Endothelial cell of umbilical vein (primary cell): ENCODE measurements at regions of chr16 and their contacts with region 1.

Region 1: DNA sequence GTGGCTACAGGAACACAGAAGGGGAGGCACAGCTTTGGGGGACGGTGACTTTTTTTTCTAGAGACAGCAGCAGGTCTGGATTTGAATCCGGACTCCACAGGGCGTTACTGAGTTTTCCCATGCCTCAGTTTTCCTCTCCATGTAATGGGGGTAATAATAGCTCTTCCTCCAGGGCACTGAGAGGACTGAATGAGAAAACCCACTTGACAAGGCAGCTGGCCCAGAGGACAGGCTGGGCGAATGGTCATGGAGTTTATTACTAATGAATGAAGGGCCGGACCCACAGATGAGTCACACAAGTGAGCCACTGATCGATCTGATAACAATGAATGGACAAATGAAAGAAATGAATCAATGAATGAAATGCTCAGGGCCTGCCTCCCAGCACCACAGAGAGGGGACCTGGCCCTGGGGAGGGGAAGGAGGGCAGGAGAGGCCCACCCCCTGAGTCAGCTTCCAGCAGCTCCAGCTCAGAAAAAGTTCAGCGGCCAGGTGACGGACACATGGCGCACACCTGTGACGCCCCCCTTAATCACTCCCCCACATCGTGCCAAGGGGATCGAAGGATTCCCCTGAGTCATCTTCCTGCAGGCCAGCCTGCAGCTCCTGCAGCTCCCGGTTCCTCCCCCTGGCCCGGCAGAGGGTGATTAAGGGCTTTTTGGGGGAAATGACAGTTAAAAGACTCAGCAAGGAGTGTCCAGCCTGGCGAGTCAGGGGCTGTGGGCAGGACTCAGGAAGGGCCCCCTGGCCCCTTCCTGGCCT is 54.3 kb downstream of the SOCS1 start:
- DNase-seq: peak; percentile 87
- H3K4me3 ChIP-seq: no peak overlapping the region
- H3K27ac ChIP-seq: peak overlapping the region; percentile 79
- H3K4me1 ChIP-seq: peaks cover 19% of the 10 kb centered on the region
- H3K27me3 ChIP-seq: no peaks in the 10 kb centered on the region
- CTCF ChIP-seq: no peak
- POLR2A ChIP-seq: no peak

Region 2: DNA sequence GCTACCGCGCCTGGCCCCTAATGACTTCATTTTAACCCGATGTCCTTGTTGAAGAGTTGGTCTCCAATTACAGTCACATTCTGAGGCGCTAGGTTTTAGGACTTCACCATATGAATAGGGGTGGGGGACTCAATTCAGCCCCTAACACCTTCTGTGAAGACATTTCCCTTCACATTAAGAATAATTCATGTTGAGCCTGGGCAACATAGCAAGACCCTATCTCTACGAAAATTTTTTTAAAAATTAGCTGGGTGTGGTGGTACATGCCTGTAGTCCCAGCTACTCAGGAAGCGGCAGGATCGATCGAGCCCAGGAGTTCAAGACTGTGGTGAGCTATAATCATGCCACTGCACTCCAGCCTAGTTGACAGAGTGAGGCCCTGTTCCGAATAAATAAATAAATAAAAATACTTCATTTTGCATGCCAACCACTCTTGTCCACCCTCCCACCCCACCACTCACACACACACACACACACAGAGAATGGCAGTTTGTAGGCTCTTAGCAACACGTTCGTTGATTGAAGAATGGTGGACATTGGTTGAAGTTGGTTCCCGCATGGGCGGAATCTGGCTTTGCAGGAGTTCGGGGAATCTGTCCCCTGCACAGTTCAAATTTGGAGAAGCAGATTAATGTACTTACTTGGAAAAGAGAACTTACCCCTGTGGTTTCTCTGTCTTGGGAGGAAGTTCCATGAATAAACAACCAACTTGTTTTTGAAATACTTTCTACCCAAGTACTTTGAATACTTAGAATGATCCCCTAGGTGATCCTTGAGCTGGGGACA is 355.3 kb before region 1 on chr16:
- CTCF ChIA-PET with region 1: no interaction called
- POLR2A ChIA-PET with region 1: no interaction called
- dilution Hi-C with region 1: no loop called
- intact Hi-C with region 1: no loop called
- DNase-seq: no peak
- H3K4me3 ChIP-seq: no peak overlapping the region
- H3K27ac ChIP-seq: no peak overlapping the region
- H3K4me1 ChIP-seq: no peaks in the 10 kb centered on the region
- H3K27me3 ChIP-seq: no peaks in the 10 kb centered on the region
- CTCF ChIP-seq: no peak
- POLR2A ChIP-seq: no peak

Region 3: DNA sequence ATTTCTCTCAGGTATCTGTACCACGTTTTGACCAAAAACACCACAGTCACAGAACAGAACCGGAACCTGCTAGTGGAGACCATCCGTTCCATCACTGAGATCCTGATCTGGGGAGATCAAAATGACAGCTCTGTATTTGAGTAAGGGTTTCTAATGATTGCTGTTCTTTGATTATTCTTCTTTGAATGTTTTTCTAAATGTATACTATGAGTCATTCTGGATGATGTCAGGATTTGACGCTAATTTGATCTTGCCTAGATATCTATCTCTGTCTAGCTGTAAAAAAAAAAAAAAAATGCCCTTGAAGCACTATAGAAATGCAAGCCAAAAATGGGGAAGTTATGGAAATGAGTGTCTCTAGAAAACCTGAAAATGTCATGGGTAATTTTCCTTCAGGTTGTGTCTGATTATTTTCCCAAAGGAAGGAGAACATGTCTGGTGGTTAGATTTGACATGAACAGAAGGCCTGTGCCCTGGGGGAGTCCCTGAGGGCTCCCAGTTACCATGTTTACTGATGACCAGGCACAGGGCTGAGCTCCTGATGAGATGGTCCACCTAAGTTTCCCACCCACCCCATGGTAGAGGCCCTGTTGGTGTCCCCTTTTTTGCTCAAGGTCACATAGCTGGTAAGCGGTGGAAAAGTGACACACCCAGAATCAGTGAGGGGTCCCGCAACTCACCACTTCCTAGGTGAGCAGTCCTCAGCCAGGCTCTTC is 243.8 kb before region 1 on chr16:
- CTCF ChIA-PET with region 1: no interaction called
- POLR2A ChIA-PET with region 1: no interaction called
- dilution Hi-C with region 1: no loop called
- intact Hi-C with region 1: loop called (anchors 5 kb)
- DNase-seq: peak; percentile 66
- H3K4me3 ChIP-seq: no peak overlapping the region
- H3K27ac ChIP-seq: peak overlapping the region; percentile 40
- H3K4me1 ChIP-seq: peaks cover 37% of the 10 kb centered on the region
- H3K27me3 ChIP-seq: no peaks in the 10 kb centered on the region
- CTCF ChIP-seq: no peak
- POLR2A ChIP-seq: no peak

Region 4: DNA sequence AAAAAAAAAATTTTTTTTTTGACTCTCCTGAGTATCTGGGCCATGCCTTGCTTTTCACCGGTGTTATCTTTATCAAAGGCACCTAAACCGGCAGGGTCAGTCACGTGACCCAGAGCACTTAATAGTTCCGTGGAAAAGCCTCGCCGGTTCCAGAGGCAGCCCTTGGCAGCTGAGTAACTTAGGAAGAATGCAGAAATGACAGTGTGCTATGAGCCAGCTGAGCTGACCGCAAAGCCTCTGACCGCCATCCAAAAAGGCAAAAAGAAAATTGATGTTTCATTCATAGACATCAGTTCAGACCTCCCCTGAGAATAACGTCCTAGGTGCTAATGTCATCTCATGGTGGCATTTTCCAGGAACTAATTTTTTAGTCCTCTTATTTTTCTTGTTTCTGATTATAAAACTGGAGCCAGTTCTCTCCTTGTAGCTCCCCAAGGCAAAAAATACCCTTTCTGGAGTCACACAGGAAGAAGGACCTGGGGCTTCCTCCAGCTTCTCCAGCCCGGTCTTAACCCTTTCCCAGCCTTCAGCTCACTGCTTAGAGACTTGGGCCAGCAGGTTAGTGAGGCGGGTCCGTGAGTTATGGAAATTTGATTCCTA is 68.2 kb before region 1 on chr16:
- CTCF ChIA-PET with region 1: interaction called, 5 read pairs
- POLR2A ChIA-PET with region 1: no interaction called
- dilution Hi-C with region 1: no loop called
- intact Hi-C with region 1: loop called (anchors 5 kb)
- DNase-seq: peak; percentile 83
- H3K4me3 ChIP-seq: no peak overlapping the region
- H3K27ac ChIP-seq: peak overlapping the region; percentile 62
- H3K4me1 ChIP-seq: peaks cover 27% of the 10 kb centered on the region
- H3K27me3 ChIP-seq: no peaks in the 10 kb centered on the region
- CTCF ChIP-seq: no peak
- POLR2A ChIP-seq: no peak

Region 5: GRCh38 chr16:11218604-11218962 is 16.9 kb after region 1 on chr16:
- CTCF ChIA-PET with region 1: interaction called, 10 read pairs
- POLR2A ChIA-PET with region 1: no interaction called
- dilution Hi-C with region 1: no loop called
- intact Hi-C with region 1: no loop called
- DNase-seq: no peak
- H3K4me3 ChIP-seq: no peak overlapping the region
- H3K27ac ChIP-seq: no peak overlapping the region
- H3K4me1 ChIP-seq: no peaks in the 10 kb centered on the region
- H3K27me3 ChIP-seq: no peaks in the 10 kb centered on the region
- CTCF ChIP-seq: peak; percentile 34 to 44
- POLR2A ChIP-seq: no peak